Activated naive CD4-positive, alpha-beta T cell treated with anti-CD3 and anti-CD28 coated beads, Interleukin-2, amount 10 ng/mL, durations not matched to agents 7 days and 5 days (primary cell): ENCODE measurements at regions of chr2 and their contacts with region 1.

Region 1: DNA sequence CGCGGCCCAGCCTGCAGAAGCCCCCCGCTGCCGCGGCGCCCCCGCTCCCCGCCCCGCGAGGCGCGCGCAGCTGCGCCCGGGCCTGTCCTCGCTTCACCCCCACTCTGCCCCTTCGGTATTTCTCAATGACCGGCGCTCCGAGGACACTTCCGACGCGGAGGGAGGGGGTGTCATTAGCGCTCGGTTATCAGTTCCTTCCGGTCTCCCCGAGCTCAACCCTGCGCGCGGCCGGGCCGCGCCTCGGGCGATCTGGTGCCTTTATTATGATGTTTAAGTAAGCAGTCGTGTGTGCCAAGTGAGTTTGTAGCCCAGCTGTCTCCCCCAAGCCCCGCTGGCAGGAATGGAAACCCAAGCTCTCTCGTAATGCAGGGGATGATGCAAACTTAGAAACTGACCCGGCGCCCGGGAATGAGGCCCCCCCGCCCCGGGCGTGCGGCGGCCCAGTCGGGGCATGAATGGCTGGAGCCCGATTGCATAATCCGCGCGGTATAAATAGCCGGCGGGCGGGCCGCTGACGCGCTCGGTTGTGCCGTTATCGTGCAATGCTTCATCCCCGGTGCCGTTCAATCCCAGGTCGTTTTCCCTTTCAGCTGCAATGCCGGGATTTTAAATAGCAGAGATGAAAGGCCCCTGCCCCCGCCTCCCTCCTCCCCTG is 3.9 kb upstream of the SPRED2 start:
- DNase-seq: peak; percentile 62
- H3K4me3 Mint-ChIP-seq: peak overlapping the region; percentile 81
- H3K27ac Mint-ChIP-seq: peak overlapping the region; percentile 69
- H3K4me1 Mint-ChIP-seq: peaks cover 23% of the 10 kb centered on the region
- H3K27me3 Mint-ChIP-seq: peaks cover 78% of the 10 kb centered on the region

Region 2: DNA sequence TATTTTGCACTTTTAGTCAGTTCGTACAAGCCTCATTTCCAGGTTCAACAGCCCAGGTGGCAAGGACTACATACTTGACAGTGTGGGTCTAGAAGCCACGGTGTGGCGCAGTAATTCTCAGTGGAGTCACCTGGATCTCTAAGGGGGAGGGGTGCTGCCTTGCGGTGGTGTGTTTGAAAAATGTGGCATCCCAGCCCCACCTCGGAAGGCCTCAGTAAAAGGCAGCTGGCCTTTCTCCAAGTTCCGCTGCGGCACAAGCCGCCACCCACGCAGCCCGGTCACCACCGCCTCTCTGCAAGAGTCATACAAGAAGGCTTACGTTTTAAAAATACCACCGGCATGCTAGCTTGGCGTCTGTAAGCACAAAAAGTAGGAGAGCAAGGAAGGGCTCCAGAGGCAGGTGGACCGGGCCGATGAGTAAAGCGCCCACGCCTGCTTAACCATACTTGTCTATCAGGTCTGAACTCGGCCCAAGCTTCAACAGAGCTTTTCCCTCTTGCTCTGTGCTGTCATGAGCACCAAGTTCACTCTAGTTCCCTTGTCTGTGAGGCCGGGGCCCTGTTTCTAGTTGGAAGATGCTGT is 53.4 kb before region 1 on chr2:
- CTCF ChIA-PET with region 1: interaction called, 11 read pairs
- DNase-seq: peak; percentile 76
- H3K4me3 Mint-ChIP-seq: peak overlapping the region; percentile 9
- H3K27ac Mint-ChIP-seq: peak overlapping the region; percentile 79
- H3K4me1 Mint-ChIP-seq: peaks cover 36% of the 10 kb centered on the region
- H3K27me3 Mint-ChIP-seq: no peaks in the 10 kb centered on the region